ENCODE measurements at regions of chr10 and their contacts with region 1.

Region 1: DNA sequence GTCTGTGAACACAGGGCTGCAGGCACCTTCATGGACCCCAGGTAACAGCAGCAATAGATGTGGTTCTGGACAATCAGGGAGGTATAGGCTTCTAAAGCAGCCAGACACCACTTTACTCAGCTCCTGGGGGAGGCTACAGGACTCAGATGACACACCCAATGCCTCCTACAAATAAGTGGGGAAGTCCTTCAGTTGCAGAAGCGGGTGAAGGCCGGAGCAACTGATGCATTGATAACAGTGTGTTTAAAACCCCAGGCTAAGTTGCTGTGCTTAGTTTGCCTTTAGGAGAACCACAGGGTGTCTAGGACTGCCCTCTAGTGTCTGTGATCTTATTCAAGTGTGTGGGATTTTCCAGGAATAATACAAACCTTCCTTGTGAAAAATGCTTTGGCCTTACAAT is 5.9 kb upstream of the ITGA8 start:
- DNase-seq: no peak
- H3K4me3 Mint-ChIP-seq: no peak overlapping the region
- H3K27ac Mint-ChIP-seq: no peak overlapping the region
- H3K4me1 Mint-ChIP-seq: no peaks in the 10 kb centered on the region
- H3K27me3 Mint-ChIP-seq: peaks cover 19% of the 10 kb centered on the region

Region 2: GRCh38 chr10:15585303-15585715 is 140.3 kb before region 1 on chr10:
- intact Hi-C with region 1: loop called (anchors 10 kb)
- DNase-seq: peak; percentile 13
- H3K4me3 Mint-ChIP-seq: no peak overlapping the region
- H3K27ac Mint-ChIP-seq: no peak overlapping the region
- H3K4me1 Mint-ChIP-seq: no peaks in the 10 kb centered on the region
- H3K27me3 Mint-ChIP-seq: peaks cover 12% of the 10 kb centered on the region

Region 3: GRCh38 chr10:15824498-15824897 is 98.9 kb after region 1 on chr10:
- intact Hi-C with region 1: loop called (anchors 5 kb)
- DNase-seq: no peak
- H3K4me3 Mint-ChIP-seq: no peak overlapping the region
- H3K27ac Mint-ChIP-seq: no peak overlapping the region
- H3K4me1 Mint-ChIP-seq: no peaks in the 10 kb centered on the region
- H3K27me3 Mint-ChIP-seq: no peaks in the 10 kb centered on the region

Measured in activated T-helper 2 cell treated with anti-CD3 and anti-CD28 coated beads, Interferon-gamma antibody, Interleukin-2, Interleukin-4, amounts not matched to agents 10 μg/mL and 5 μg/mL and 100 μg/mL, durations not matched to agents 14 hours and 24 hours and 36 hours (primary cell).